ENCODE measurements at regions of chr17 and their contacts with region 1.

Region 1: DNA sequence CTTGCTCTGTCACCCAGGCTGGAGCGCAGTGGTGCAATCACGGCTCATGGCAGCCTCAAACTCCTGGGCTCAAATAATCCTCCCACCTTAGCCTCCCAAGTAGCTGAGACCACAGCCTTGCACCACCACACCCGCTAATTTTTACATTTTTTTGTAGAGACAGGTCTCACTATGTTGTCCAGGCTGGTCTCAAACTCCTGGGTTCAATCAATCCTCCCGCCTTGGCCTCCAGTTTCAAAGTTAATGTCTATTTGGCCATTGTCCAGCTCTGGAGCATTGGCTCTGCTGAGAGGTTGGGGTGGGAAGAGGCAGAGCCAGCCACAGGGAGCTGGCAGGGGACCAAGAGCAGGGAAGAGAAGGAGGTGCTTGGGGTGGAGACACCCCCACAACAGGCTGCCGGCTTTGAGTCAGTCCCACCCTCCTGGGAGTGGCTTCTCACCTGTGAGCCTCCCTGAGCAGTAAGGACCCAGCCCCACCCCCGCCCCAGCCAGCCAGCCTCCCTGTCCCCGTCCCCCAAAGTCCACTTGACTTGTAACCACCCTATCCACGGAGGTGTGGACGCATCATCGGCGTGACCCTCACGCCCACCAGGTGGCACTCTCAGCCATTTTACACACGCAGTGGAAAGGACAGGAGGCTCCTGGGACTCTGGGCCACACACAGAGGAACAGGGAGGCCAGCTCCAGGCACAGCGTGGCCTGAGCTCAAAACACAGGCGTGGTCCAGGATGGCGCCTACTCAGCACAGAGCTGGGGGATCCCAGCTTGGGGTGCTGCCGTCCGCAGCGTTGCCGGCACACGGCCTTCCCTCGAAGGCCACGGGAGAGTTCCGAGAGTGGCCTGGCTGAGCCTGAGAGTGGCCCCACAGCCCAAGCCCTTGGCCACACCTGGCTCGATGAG is 22.8 kb upstream of the PVALEF start:
- DNase-seq: peak; percentile 56
- ATAC-seq: peak; percentile 98
- H3K4me3 ChIP-seq: no peak overlapping the region
- H3K27ac ChIP-seq: no peak overlapping the region
- H3K4me1 ChIP-seq: no peaks in the 10 kb centered on the region
- H3K27me3 ChIP-seq: peaks cover 5% of the 10 kb centered on the region
- CTCF ChIP-seq: peak; percentile 70
- POLR2A ChIP-seq: no peak
- RAD21 ChIP-seq: peak; percentile 72

Region 2: DNA sequence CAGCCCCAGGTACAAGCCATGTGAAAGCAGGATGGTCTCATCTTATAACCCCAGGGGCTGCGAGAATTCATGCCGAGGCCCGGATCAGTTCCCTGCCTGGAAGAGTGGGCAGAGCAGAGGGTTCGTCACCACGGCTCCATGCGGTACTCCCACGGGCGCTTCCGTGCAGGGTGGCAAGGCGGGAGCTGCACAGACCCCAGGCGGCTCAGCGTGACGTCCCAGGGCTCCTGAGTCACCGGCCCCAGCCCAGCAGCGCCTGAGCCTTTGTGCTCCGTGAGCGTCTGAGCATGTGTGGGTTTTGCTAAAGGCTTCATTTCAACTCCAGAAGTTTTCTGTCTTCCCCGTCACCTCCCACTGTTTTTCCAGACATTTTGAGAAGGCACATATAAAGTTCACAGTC is 222.1 kb before region 1 on chr17:
- CTCF ChIA-PET with region 1: no interaction called
- POLR2A ChIA-PET with region 1: no interaction called
- dilution Hi-C with region 1: no loop called
- in situ Hi-C with region 1: no loop called
- intact Hi-C with region 1: no loop called
- DNase-seq: peak; percentile 38
- ATAC-seq: no peak
- H3K4me3 ChIP-seq: no peak overlapping the region
- H3K27ac ChIP-seq: no peak overlapping the region
- H3K4me1 ChIP-seq: no peaks in the 10 kb centered on the region
- H3K27me3 ChIP-seq: no peaks in the 10 kb centered on the region
- CTCF ChIP-seq: no peak
- POLR2A ChIP-seq: no peak
- RAD21 ChIP-seq: no peak

Region 3: DNA sequence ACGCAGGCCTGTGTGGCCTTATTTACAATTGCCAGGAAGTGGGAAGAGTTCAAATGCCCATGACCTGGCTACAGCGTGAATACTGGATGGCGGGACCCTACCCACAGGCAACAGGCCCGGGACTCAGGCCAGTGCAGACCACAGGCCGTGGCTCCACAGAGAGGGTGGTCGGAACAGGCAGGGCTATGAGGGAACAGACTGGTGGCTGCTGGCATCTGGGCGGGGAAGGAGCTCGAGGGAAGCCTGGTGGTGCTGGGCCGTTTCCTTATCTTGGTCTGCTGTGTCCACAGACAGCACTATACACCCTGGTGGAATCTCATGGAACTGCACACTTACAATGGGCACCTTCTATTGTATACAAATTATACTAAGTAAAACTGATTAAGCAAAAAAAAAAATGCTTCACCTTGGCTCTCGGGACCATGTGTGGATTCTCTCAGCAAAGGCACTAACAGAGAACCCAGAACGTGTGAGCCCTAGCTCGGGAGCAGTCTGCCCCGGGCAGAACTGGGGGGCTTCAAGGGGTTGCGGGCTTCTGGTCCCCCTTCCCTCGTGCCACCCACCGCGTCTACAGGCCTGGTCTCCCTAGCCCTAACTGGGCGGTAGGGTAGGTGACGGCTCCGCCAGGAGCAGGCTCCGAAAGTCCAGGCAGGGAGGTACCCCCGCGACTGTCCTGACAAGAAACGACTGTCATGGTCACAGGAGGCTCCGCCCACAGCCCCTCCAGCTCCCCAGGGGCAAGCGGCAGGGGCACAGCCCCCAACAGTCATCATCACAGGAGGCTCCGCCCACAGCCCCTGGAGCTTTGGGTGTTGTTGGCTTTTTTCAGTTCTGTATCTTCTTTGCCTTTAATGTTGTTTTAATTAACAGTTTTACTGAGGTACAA is 58.4 kb after region 1 on chr17:
- CTCF ChIA-PET with region 1: no interaction called
- POLR2A ChIA-PET with region 1: no interaction called
- dilution Hi-C with region 1: no loop called
- in situ Hi-C with region 1: no loop called
- intact Hi-C with region 1: loop called (anchors 1 kb)
- DNase-seq: peak; percentile 72
- ATAC-seq: peak; percentile 100
- H3K4me3 ChIP-seq: no peak overlapping the region
- H3K27ac ChIP-seq: no peak overlapping the region
- H3K4me1 ChIP-seq: no peaks in the 10 kb centered on the region
- H3K27me3 ChIP-seq: no peaks in the 10 kb centered on the region
- CTCF ChIP-seq: peak; percentile 65
- POLR2A ChIP-seq: no peak
- RAD21 ChIP-seq: peak; percentile 55

Region 4: GRCh38 chr17:81222906-81223761 is 80.6 kb after region 1 on chr17 and contains the start of gene CEP131:
- CTCF ChIA-PET with region 1: no interaction called
- POLR2A ChIA-PET with region 1: interaction called, 3 read pairs
- dilution Hi-C with region 1: no loop called
- in situ Hi-C with region 1: no loop called
- intact Hi-C with region 1: loop called (anchors 5 kb)
- DNase-seq: peak; percentile 97
- ATAC-seq: peak; percentile 98
- H3K4me3 ChIP-seq: peak within 1 kb of the TSS; percentile 62
- H3K27ac ChIP-seq: no peak within 1 kb of the TSS; the same call in 1 of the 2 replicates
- H3K4me1 ChIP-seq: peaks cover 8% of the 10 kb centered on the region; the same call in 1 of the 2 replicates
- H3K27me3 ChIP-seq: no peaks in the 10 kb centered on the region
- CTCF ChIP-seq: no peak
- POLR2A ChIP-seq: no peak
- RAD21 ChIP-seq: no peak
- total RNA-seq, gene CEP131: 4.8 and 5.3 TPM in 2 replicates

Region 5: GRCh38 chr17:81241648-81242420 is 99.3 kb after region 1 on chr17:
- CTCF ChIA-PET with region 1: no interaction called
- POLR2A ChIA-PET with region 1: no interaction called
- dilution Hi-C with region 1: no loop called
- in situ Hi-C with region 1: no loop called
- intact Hi-C with region 1: loop called (anchors 1 kb)
- DNase-seq: peak; percentile 13
- ATAC-seq: no peak
- H3K4me3 ChIP-seq: no peak overlapping the region
- H3K27ac ChIP-seq: no peak overlapping the region
- H3K4me1 ChIP-seq: peaks cover 17% of the 10 kb centered on the region
- H3K27me3 ChIP-seq: no peaks in the 10 kb centered on the region
- CTCF ChIP-seq: peak; percentile 65
- POLR2A ChIP-seq: no peak
- RAD21 ChIP-seq: peak; percentile 72

Region 6: GRCh38 chr17:81394921-81395599 is 252.5 kb after region 1 on chr17 and contains the start of gene BAHCC1:
- CTCF ChIA-PET with region 1: no interaction called
- POLR2A ChIA-PET with region 1: no interaction called
- dilution Hi-C with region 1: no loop called
- in situ Hi-C with region 1: no loop called
- intact Hi-C with region 1: no loop called
- DNase-seq: peak; percentile 100
- ATAC-seq: peak; percentile 62
- H3K4me3 ChIP-seq: peak within 1 kb of the TSS; percentile 57
- H3K27ac ChIP-seq: peak within 1 kb of the TSS; percentile 90
- H3K4me1 ChIP-seq: peaks cover 18% of the 10 kb centered on the region
- H3K27me3 ChIP-seq: no peaks in the 10 kb centered on the region
- CTCF ChIP-seq: 0 out of 2 replicates have a peak, but pooled peaks have one; percentile 0
- POLR2A ChIP-seq: peak; percentile 94
- RAD21 ChIP-seq: no peak
- total RNA-seq, gene BAHCC1: 0.36 and 0.83 TPM in 2 replicates

Region 7: GRCh38 chr17:81508639-81509206 is 366.2 kb after region 1 on chr17:
- CTCF ChIA-PET with region 1: no interaction called
- POLR2A ChIA-PET with region 1: interaction called, 16 read pairs
- dilution Hi-C with region 1: no loop called
- in situ Hi-C with region 1: no loop called
- intact Hi-C with region 1: no loop called
- DNase-seq: peak; percentile 52
- ATAC-seq: 0 out of 2 replicates have a peak, but pooled peaks have one; percentile 0
- H3K4me3 ChIP-seq: peak overlapping the region; percentile 79
- H3K27ac ChIP-seq: no peak overlapping the region
- H3K4me1 ChIP-seq: no peaks in the 10 kb centered on the region; the same call in 1 of the 2 replicates
- H3K27me3 ChIP-seq: no peaks in the 10 kb centered on the region
- CTCF ChIP-seq: no peak
- POLR2A ChIP-seq: peak; percentile 58; the same call in 1 of the 2 replicates
- RAD21 ChIP-seq: no peak